Dendritic cell treated with granulocyte-macrophage colony-stimulating factor and Interleukin-4, amounts not matched to agents 40 ng/mL and 50 ng/mL, for 4 days (primary cell): ENCODE measurements at regions of chr22 and their contacts with region 1.

Region 1: DNA sequence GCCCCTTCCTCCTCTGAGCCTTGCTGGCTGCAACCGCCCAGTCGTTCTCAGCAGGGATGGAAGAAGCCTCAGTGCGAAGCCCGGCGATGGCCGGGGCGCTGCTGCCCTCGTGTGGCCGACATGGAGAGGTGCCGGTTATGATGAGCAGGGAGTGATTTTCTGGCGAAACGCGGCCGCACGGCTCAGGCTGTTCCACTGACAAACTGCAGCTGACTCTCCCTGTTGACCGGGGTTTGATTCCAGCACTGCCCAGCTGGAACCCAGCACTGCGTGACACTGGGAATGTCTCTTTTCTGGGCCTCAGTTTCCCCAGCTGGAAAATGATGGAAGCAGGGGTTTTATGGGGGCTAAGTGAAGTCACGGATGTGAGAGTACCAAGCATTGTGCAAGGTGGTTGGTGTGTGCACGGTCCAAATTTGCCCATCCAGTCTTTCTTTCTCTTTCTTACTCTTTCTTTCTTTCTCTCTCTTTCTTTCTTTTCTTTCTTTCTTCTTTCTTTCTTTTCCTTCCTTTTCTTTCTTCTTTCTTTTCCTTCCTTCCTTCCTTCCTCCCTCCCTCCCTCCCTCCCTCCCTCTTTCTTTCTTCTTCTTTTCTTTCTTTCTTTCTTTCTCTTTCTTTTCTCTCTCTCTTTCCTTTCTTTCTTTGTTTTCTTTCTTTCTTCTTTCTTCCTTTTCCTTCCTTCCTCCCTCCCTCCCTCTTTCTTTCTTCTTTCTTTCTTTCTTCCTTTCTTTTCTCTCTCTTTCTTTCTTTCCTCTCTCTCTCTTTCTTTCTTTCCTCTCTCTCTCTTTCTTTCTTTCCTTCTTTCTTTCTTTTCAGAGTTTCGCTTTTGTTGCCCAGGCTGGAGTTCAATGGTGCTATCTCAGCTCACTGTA is 25.8 kb upstream of the MPPED1 start:
- H3K4me3 Mint-ChIP-seq: no peak overlapping the region
- H3K27ac Mint-ChIP-seq: no peak overlapping the region
- H3K4me1 Mint-ChIP-seq: peaks cover 16% of the 10 kb centered on the region
- H3K27me3 Mint-ChIP-seq: peaks cover 28% of the 10 kb centered on the region

Region 2: GRCh38 chr22:43230971-43231723 is 154.9 kb before region 1 on chr22:
- intact Hi-C with region 1: loop called (anchors 1 kb)
- H3K4me3 Mint-ChIP-seq: no peak overlapping the region
- H3K27ac Mint-ChIP-seq: no peak overlapping the region
- H3K4me1 Mint-ChIP-seq: peaks cover 5% of the 10 kb centered on the region
- H3K27me3 Mint-ChIP-seq: peaks cover 8% of the 10 kb centered on the region

Region 3: DNA sequence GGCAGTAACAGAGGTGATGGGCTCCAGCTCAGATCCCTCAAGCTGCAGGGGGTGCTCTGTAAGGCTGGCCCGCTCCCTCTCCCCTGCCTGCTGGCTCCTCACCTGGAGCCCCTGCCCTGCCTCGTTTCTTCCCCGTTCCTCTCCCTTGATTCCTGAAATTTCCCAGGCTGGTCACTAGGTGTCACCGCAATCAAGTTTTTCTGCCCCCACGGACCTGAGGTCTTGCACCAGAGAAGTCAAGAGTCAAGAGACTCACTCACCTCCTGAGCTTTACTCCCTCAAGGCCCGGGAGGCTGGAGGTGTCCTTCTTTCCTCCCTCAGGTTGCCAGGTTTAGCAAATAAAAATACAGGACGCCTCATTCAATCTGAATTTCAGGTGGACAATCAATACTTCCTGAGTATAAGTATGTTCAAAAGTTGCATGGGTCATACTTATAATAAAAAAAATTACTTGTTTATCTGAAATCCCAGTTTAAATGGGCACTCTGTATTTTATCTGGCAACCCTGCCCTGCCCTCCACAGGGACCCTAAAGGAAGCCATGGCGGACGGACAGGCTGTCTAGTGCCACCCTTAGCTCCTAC is 112.0 kb before region 1 on chr22:
- intact Hi-C with region 1: loop called (anchors 1 kb)
- H3K4me3 Mint-ChIP-seq: no peak overlapping the region
- H3K27ac Mint-ChIP-seq: no peak overlapping the region
- H3K4me1 Mint-ChIP-seq: peaks cover 11% of the 10 kb centered on the region
- H3K27me3 Mint-ChIP-seq: peaks cover 5% of the 10 kb centered on the region

Region 4: DNA sequence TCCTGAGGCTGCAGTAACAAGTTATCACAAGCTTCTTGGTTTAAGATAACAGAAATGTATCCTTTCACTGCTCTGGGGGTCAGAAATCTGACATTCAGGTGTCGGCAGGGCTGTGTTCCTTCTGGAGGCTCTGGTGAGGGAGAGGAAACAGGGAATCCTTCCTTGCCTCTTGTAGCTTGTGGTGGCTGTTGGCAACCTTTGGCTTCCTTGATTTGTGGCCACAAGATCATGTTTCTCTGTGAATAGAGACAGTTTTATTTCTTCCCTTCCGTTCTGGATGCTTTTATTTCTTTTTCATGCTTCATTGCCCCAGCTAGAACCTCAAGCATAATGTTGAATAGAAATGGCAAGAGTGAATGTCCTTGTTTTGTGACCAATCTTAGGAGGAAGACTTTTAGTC is 69.8 kb after region 1 on chr22:
- intact Hi-C with region 1: no loop called
- H3K4me3 Mint-ChIP-seq: no peak overlapping the region
- H3K27ac Mint-ChIP-seq: no peak overlapping the region
- H3K4me1 Mint-ChIP-seq: no peaks in the 10 kb centered on the region
- H3K27me3 Mint-ChIP-seq: peaks cover 12% of the 10 kb centered on the region

Region 5: GRCh38 chr22:43481568-43482317 is 95.7 kb after region 1 on chr22:
- intact Hi-C with region 1: loop called (anchors 2 kb)
- H3K4me3 Mint-ChIP-seq: peak overlapping the region; percentile 51
- H3K27ac Mint-ChIP-seq: peak overlapping the region; percentile 40
- H3K4me1 Mint-ChIP-seq: peaks cover 25% of the 10 kb centered on the region
- H3K27me3 Mint-ChIP-seq: no peaks in the 10 kb centered on the region

Region 6: DNA sequence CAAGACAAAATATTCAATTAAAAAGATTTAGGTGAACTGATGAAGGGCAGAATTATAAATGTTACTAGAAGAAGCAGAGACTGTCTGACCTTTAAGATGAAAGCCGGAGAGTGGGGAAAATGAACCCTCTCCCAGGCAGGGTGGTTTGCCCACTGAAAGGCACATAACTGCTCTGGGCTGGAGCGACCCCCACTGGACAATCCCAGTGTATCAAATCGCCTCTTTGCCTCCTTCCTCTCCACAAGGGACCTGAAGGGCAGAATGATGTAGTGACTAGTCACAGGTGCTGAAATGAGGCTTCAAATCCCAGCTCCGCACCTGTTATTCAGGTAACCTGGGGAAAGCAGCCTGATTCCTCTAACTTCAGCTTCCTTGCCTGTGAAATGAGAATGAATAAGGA is 357.1 kb after region 1 on chr22:
- intact Hi-C with region 1: loop called (anchors 5 kb)
- H3K4me3 Mint-ChIP-seq: no peak overlapping the region
- H3K27ac Mint-ChIP-seq: no peak overlapping the region
- H3K4me1 Mint-ChIP-seq: no peaks in the 10 kb centered on the region
- H3K27me3 Mint-ChIP-seq: peaks cover under 1% of the 10 kb centered on the region